Activated naive CD4-positive, alpha-beta T cell treated with anti-CD3 and anti-CD28 coated beads for 36 hours (primary cell): ENCODE measurements at regions of chr19 and their contacts with region 1.

Region 1: DNA sequence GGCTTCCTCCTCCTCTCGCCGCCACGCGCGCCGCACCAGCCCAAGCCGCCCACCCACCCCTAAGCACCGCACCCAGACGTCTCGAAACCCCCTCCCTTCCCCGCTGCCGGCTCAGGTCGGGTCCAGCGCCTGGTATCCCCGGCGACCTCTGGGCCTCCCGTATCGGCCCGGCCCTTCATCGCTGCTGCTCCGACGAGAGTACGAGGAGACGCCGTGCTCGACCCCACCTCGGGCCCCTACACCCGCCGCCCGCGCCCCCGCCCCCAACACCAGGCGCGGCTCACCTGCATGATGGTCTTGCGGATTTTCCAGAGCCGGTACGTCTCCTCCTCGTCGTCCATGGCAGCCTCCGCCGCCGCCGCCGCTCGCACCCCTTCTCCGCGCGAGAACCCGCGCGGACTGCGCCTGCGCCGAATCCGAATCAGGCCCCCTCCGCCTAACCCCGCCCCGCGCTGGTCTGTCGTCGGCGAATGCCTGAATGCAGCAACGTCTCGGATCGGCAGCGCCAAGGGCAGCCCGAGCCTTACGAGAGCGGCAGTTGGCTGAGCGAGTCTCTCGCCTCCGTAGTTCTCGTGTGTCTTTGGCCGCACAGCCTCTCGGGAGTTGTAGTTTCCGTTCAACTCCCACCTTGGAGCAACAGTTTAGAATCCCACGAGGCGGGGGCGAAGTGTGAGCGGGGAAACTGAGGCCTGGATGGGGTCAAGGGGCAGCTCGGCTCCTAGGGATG is at the start of gene POLR2E:
- DNase-seq: peak; percentile 99
- H3K4me3 Mint-ChIP-seq: peak within 1 kb of the TSS; percentile 92
- H3K27ac Mint-ChIP-seq: peak within 1 kb of the TSS; percentile 92
- H3K4me1 Mint-ChIP-seq: peaks cover 65% of the 10 kb centered on the region
- H3K27me3 Mint-ChIP-seq: no peaks in the 10 kb centered on the region
- total RNA-seq, gene POLR2E: 238 to 258 TPM

Region 2: DNA sequence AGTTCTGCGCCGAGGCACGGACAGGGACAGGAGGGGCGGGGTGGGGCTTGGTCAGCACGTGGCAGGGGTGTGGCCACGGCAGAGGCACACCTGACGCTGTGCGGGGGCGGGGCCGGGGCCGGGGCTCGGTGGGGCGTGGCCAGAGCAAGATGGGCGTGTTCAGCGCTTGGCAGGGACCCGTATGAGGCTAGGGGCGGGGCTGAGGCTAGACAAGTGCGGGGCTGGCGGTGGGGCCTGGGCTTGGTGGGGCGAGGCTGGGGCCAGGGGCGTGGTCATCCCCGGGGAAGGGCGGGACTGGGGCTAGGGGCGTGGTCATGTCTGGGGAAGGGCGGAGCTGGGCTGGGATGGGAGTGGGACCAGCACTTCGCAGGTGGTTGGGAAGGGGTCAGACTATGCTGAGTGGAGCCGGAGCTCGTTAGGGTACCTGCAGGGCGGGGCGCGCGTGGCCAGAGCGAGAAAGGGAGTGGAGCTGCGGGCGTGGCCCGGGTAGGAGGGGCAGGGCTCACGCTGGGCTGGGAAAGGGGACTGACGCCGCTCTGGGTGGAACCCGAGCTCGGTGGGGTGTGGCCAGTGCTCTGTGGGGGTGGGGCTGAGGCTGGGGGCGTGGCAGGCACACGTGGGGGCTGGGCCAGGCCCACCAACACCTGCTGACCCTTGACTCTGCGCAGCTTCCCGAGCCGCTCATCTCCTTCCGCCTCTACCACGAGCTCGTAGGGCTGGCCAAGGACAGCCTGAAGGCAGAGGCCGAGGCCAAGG is 12.8 kb before region 1 on chr19:
- CTCF ChIA-PET with region 1: interaction called, 5 read pairs
- intact Hi-C with region 1: loop called (anchors 1 kb)
- DNase-seq: peak; percentile 92
- H3K4me3 Mint-ChIP-seq: no peak overlapping the region
- H3K27ac Mint-ChIP-seq: peak overlapping the region; percentile 24
- H3K4me1 Mint-ChIP-seq: peaks cover 54% of the 10 kb centered on the region
- H3K27me3 Mint-ChIP-seq: no peaks in the 10 kb centered on the region